Activated T-helper 2 cell treated with anti-CD3 and anti-CD28 coated beads, Interferon-gamma antibody, Interleukin-2, Interleukin-4, amounts not matched to agents 10 μg/mL and 5 μg/mL and 100 μg/mL, durations not matched to agents 14 hours and 24 hours and 36 hours (primary cell): ENCODE measurements at regions of chr6 and their contacts with region 1.

Region 1: DNA sequence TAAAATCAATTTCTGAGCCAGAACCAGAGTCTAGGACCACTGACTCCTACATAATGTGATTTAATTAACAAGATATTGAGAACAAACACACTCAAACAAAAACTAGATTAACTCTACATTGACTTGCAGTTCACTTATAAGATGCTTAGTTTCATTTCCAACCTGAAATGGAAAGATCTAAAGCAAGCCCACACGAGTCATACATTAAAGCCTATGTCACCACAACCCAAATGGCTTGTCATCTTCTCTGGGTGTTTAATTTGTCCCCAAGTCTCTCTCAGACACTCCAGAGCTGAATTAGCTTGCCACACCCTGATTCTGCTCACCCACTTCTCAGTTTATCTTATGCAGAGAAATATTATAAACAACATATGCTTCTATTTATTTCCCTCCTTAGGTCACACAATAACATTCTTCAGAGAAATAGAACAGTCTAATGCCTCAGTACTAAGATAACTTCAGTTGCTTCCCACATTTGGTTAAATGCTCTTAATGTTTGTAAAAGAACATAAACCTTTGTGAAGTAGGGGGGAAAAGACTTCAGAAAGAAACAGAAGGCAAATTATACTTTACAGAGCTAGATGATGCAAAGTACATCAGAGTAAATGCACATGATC is 8.8 kb upstream of the FBXO30 start:
- DNase-seq: no peak
- H3K4me3 Mint-ChIP-seq: no peak overlapping the region
- H3K27ac Mint-ChIP-seq: peak overlapping the region; percentile 46
- H3K4me1 Mint-ChIP-seq: peaks cover 42% of the 10 kb centered on the region
- H3K27me3 Mint-ChIP-seq: no peaks in the 10 kb centered on the region

Region 2: DNA sequence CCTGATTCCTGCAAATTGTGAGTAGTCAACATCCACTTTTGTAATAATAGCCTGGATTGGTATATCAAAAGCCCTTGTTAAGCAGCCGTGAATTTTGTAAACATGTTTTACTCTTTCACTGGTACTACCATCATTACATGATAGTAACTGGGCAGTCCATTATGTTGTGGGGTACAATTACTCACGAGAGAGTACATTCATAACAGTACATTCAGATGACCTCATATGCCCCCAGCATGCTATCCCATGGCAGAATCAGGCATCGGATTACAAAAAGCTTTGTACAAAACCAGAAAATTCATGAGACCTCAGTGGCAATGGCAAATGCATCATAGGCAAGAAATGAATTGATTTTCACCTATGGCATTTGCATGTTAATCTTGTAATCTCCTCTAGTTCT is 254.3 kb before region 1 on chr6:
- intact Hi-C with region 1: no loop called
- DNase-seq: no peak
- H3K4me3 Mint-ChIP-seq: no peak overlapping the region
- H3K27ac Mint-ChIP-seq: no peak overlapping the region
- H3K4me1 Mint-ChIP-seq: no peaks in the 10 kb centered on the region
- H3K27me3 Mint-ChIP-seq: no peaks in the 10 kb centered on the region

Region 3: DNA sequence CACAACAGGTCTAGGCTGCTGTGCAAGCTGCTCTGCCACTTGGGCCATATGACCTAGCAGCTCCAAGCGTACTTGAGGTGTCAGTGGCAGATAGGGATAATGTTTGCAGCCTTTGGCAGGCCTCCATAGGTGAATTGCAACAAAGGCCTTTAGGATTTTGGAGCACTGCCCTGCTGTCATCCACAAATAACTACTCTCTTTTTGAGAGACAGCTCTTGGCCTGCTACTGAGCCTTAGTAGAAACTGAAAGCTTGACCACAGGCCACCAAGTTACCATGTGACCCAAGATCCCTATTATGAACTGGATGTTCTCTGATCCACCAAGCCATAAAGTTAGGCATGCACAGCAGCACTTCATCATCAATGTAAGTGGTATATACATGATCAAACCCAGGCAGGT is 38.8 kb before region 1 on chr6:
- intact Hi-C with region 1: no loop called
- DNase-seq: no peak
- H3K4me3 Mint-ChIP-seq: no peak overlapping the region
- H3K27ac Mint-ChIP-seq: no peak overlapping the region
- H3K4me1 Mint-ChIP-seq: no peaks in the 10 kb centered on the region
- H3K27me3 Mint-ChIP-seq: no peaks in the 10 kb centered on the region

Region 4: GRCh38 chr6:145836170-145836569 is 12.7 kb after region 1 on chr6:
- intact Hi-C with region 1: loop called (anchors 1 kb)
- DNase-seq: no peak
- H3K4me3 Mint-ChIP-seq: no peak overlapping the region
- H3K27ac Mint-ChIP-seq: peak overlapping the region; percentile 44
- H3K4me1 Mint-ChIP-seq: peaks cover 7% of the 10 kb centered on the region
- H3K27me3 Mint-ChIP-seq: no peaks in the 10 kb centered on the region

Region 5: DNA sequence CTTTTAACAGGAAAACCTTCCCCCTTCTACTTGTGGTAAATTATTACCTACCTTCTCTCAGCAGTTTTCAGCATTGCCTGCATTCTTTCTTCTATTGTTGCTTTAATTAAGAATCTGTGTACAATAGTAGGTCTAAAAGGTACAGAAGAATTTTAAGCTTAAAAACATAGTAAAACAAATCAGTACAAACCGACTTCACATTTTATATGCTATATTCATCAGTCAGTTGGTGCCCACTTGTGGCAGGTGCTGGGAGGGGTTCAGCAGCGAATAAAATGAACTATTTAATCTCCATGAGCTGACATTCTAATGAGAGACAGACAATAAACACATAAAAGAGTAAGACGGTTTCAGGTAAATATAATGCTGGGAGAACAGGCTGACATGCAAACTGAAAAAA is 64.5 kb after region 1 on chr6:
- intact Hi-C with region 1: loop called (anchors 5 kb)
- DNase-seq: no peak
- H3K4me3 Mint-ChIP-seq: no peak overlapping the region
- H3K27ac Mint-ChIP-seq: no peak overlapping the region
- H3K4me1 Mint-ChIP-seq: no peaks in the 10 kb centered on the region
- H3K27me3 Mint-ChIP-seq: no peaks in the 10 kb centered on the region

Region 6: GRCh38 chr6:146850238-146850896 is 1026.9 kb after region 1 on chr6:
- intact Hi-C with region 1: loop called (anchors 5 kb)
- DNase-seq: no peak
- H3K4me3 Mint-ChIP-seq: no peak overlapping the region
- H3K27ac Mint-ChIP-seq: peak overlapping the region; percentile 81
- H3K4me1 Mint-ChIP-seq: peaks cover 36% of the 10 kb centered on the region
- H3K27me3 Mint-ChIP-seq: no peaks in the 10 kb centered on the region